ENCODE measurements at regions of chr1 and their contacts with region 1.

Region 1: GRCh38 chr1:214328770-214329469 is 48.0 kb downstream of the SMYD2 start:
- DNase-seq: peak; percentile 84

Region 2: DNA sequence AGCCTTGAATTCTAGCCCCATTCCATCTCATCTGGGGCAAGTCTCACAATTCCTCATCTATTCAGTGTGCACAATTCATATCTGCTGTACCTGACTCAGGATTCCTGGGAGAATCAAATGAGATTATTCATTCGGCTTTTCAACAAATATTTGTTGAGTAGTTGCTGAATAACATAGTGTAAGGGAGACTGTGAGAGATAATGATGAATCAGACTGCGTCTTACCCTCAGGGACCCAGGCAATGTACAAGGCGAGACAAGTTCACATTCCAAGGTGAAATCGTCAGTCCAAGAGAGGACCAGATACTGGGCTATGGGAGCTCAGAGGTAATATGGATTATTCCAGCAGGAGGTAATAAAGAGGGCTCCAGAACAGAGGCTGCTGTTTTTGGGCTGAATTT is 115.8 kb before region 1 on chr1:
- CTCF ChIA-PET with region 1: interaction called, 80 read pairs
- POLR2A ChIA-PET with region 1: no interaction called
- DNase-seq: no peak

Region 3: DNA sequence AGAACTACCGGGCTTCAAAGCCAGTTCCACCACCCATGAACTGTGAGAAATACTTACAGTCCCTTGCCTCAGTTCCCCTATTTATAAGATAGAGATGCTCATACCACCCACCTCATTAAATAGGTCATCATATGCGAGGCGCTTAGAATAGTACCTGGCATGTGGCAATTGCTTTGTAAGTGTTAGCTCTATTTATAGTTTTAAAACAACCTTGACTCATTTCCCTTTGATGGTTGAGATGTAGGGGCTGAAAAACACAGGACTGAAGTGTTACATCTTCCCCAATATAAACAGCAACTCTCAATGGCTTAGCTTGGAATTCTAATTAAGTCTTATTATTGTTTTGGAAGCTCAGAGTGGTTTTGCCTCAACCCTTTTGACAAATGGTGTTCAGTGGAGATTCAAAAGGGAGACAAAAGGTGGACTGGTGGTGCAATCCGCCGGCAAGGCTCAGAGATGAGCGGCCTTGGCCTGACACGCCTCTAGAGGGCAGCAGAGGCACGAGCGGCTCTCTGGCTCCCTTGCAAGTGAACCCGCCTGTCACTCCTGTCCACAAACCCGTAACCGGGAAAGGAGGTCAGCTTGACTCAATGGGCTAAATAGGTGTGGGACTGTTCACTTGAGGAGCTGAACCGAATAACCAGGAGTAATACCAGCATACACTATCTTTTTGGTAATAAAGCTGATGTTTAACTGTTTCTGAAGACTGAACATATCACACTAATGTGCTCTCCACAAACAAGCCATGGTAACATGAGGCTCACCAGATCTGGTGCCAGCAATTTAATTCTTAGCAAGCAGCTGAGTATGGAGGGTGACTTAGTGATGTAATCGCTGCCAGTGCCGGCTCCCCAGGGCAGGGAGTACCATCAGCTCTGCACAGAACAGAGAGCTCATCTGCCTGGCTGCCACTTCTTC is 67.5 kb before region 1 on chr1:
- CTCF ChIA-PET with region 1: interaction called, 151 read pairs
- POLR2A ChIA-PET with region 1: interaction called, 4 read pairs
- DNase-seq: peak; percentile 90

Region 4: GRCh38 chr1:214494706-214495105 is 165.8 kb after region 1 on chr1:
- CTCF ChIA-PET with region 1: no interaction called
- POLR2A ChIA-PET with region 1: no interaction called
- DNase-seq: no peak

Region 5: GRCh38 chr1:214525535-214526019 is 196.7 kb after region 1 on chr1:
- CTCF ChIA-PET with region 1: interaction called, 11 read pairs
- POLR2A ChIA-PET with region 1: no interaction called
- DNase-seq: no peak

Region 6: GRCh38 chr1:214593158-214593557 is 264.2 kb after region 1 on chr1:
- CTCF ChIA-PET with region 1: interaction called, 95 read pairs
- POLR2A ChIA-PET with region 1: no interaction called
- DNase-seq: no peak